Mammary epithelial cell (primary cell): ENCODE measurements at regions of chr13 and their contacts with region 1.

Region 1: GRCh38 chr13:44577236-44578066 is 1.3 kb upstream of the TSC22D1 start:
- DNase-seq: peak; percentile 93
- H3K4me3 ChIP-seq: peak overlapping the region; percentile 82 to 88 (median 85)
- H3K27ac ChIP-seq: peak overlapping the region; percentile 83
- H3K4me1 ChIP-seq: peaks cover 36% of the 10 kb centered on the region
- H3K27me3 ChIP-seq: no peaks in the 10 kb centered on the region
- CTCF ChIP-seq: no peak

Region 2: GRCh38 chr13:44132710-44133109 is 444.7 kb before region 1 on chr13:
- CTCF ChIA-PET with region 1: no interaction called
- dilution Hi-C with region 1: no loop called
- in situ Hi-C with region 1: no loop called
- intact Hi-C with region 1: no loop called
- DNase-seq: peak; percentile 64
- H3K4me3 ChIP-seq: no peak overlapping the region
- H3K27ac ChIP-seq: peak overlapping the region; percentile 25
- H3K4me1 ChIP-seq: peaks cover 30% of the 10 kb centered on the region
- H3K27me3 ChIP-seq: no peaks in the 10 kb centered on the region
- CTCF ChIP-seq: no peak

Region 3: DNA sequence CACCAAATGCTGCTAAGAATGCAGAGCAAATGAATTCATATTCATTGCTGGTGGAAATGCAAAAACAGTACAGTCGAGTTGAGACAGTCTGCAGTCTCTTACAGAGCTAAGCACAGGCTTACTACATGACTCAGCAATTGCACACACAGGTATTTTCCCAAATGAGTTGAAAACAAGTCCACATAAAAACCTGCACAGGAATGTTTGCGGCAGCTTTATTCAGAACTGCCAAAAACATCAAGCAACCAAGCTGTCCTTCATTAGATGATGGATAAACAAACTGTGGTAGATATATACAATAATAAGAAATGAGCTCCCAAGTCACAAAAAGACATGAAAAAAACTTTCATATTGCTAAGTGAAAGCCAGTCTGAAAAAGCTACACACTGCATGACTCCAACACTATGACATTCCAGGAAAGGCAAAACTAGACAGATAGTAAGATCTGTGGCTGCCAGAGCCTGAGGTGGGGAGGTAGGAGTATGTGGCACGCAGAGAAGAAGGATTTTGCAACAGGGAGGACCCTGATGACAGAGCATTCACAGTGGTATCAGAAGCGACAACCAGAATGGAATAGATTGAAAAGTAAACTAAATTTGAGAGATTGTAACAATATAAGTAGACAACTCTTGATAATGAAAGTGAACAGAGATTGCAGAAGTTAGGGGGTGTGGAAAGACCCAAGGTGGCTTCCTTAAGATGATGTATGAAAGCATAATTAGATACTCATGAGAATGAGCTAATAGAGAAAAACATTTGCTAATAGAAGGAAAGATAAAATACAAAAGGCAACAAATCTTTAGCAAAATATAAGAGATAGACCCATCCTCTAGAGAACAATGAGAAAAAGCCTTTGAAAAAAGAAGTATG is 54.1 kb before region 1 on chr13:
- CTCF ChIA-PET with region 1: no interaction called
- dilution Hi-C with region 1: no loop called
- in situ Hi-C with region 1: no loop called
- intact Hi-C with region 1: loop called (anchors 2 kb)
- DNase-seq: peak; percentile 91
- H3K4me3 ChIP-seq: peak overlapping the region; percentile 17 to 41 (median 37)
- H3K27ac ChIP-seq: peak overlapping the region; percentile 62
- H3K4me1 ChIP-seq: peaks cover 14% of the 10 kb centered on the region
- H3K27me3 ChIP-seq: no peaks in the 10 kb centered on the region
- CTCF ChIP-seq: no peak

Region 4: DNA sequence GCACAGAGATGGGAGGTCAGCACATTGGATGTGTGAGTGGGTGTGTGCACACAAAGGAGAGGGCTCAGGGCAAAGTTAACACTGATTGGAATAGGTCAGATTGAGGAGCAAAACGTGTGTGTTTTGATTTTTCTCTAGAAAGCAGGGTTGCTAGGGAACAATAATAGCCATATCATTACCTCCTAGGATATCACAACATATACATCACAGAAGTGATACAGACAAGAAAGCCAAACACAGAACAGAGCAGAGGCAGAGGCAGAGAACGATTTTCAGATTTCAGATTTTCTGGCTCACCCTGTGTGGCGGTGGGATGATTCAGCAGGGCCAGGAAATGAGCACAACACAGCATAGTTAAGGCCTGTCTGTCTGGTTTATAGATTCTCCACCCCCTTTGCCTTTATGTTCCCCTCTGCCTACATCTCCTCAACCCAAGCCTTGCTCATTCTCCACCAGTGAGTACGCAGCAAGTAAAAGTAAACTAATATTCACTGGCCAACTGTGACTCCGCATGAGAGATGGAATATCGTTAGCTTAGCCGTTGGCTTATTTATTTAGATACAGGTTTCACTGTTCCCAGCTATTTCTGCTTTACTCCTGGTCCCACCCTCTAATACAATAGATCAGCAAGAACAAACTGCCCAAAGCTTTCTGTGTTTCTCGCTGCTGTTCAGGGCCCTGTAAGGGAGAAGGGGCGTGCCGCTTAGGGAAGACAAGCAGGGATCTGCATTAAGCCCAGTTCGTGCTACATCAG is 181.4 kb after region 1 on chr13:
- CTCF ChIA-PET with region 1: no interaction called
- dilution Hi-C with region 1: no loop called
- in situ Hi-C with region 1: no loop called
- intact Hi-C with region 1: loop called (anchors 5 kb)
- DNase-seq: peak; percentile 92
- H3K4me3 ChIP-seq: no peak overlapping the region
- H3K27ac ChIP-seq: peak overlapping the region; percentile 95
- H3K4me1 ChIP-seq: peaks cover 60% of the 10 kb centered on the region
- H3K27me3 ChIP-seq: no peaks in the 10 kb centered on the region
- CTCF ChIP-seq: no peak

Region 5: DNA sequence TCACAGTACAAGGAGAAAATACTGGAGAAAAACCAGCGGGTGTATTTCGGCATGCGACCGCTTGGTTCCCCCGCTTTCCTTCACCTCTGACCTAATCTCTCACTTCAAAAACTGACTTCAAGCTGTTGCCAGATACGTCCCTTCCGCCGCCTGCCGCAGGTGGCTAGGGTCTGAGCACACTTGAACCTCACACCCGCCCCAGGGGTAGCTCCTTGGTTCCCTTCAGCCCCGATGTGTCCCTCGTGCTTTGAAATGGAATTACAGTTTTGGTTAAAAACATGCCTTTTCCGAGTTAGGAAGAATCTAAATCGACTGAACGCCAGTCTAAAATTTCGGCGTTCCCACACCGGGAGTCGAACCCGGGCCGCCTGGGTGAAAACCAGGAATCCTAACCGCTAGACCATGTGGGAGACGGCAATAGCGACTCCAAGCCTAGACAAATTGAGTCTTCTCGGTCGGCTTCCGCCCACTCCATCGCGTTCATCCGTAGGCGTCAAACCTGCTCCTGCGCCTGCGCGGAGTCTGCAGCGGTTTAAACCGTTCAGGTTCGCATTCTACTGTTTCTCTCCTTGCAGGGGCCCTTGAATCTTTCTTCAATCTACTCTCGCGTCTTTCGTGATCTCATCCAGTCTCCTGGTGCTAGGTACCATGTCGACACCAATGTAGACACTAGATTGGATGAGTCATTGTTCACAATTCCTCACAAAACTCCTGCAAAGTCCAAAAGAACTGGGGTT is 340.3 kb after region 1 on chr13:
- CTCF ChIA-PET with region 1: no interaction called
- dilution Hi-C with region 1: no loop called
- in situ Hi-C with region 1: no loop called
- intact Hi-C with region 1: loop called (anchors 1 kb)
- DNase-seq: peak; percentile 95
- H3K4me3 ChIP-seq: peak overlapping the region; percentile 54 to 58 (median 56)
- H3K27ac ChIP-seq: peak overlapping the region; percentile 84
- H3K4me1 ChIP-seq: peaks cover 26% of the 10 kb centered on the region
- H3K27me3 ChIP-seq: no peaks in the 10 kb centered on the region
- CTCF ChIP-seq: peak in 1 of 2 donors; percentile 40